MCF 10A (cell line): ENCODE measurements at regions of chr15 and their contacts with region 1.

Region 1: DNA sequence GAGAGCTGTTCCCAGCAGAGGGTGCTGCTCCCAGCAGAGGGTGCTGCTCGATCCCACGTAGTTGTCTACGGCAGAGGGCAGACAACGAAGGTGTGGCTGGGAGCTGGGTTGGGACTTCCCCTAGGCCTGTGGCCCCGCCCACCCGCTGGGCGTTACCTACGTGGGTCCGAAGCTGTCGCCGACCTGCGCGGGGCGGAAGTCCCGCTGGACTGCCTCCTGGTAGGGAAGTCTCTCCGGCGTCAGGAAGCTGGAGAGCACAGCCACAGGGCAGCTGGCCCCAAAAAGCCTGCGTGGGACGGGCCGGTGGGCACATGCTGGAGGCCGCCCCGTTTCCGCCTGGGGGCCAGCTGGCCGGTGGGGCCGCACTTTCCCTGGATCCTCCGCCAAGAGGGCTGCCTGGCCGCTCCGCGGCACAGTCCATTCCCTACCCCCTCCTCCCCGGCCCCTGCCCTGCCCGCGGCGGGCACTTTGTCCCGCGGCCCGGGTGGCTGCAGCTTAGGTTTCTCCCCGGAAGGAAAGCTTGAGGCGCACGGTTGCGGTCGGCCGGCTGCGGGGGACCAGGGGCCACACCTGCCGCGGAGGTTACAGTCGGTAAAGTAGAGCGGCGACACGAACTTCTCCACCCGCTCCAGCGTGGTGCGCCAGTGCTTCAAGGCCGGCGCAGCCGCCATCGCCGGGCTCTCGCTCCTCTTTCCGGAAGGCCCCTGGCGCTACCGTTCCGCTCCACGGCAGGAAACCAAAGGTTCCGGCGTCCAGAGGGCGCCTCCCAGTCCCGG is at the start of gene MAN2C1:
- DNase-seq: peak; percentile 97
- H3K4me3 Mint-ChIP-seq: peak within 1 kb of the TSS; percentile 91
- H3K27ac Mint-ChIP-seq: peak within 1 kb of the TSS; percentile 96
- H3K4me1 Mint-ChIP-seq: peaks cover 8% of the 10 kb centered on the region
- H3K27me3 Mint-ChIP-seq: no peaks in the 10 kb centered on the region
- CTCF ChIP-seq: peak; percentile 64
- total RNA-seq, gene MAN2C1: 163 and 165 TPM in 2 replicates

Region 2: GRCh38 chr15:74695597-74696397 is 672.3 kb before region 1 on chr15 and contains the start of gene EDC3:
- CTCF ChIA-PET with region 1: no interaction called
- POLR2A ChIA-PET with region 1: no interaction called
- intact Hi-C with region 1: no loop called
- DNase-seq: peak; percentile 85
- H3K4me3 Mint-ChIP-seq: peak within 1 kb of the TSS; percentile 95
- H3K27ac Mint-ChIP-seq: peak within 1 kb of the TSS; percentile 99
- H3K4me1 Mint-ChIP-seq: no peaks in the 10 kb centered on the region
- H3K27me3 Mint-ChIP-seq: peaks cover 6% of the 10 kb centered on the region
- CTCF ChIP-seq: no peak
- total RNA-seq, gene EDC3: 42.8 and 53.3 TPM in 2 replicates

Region 3: DNA sequence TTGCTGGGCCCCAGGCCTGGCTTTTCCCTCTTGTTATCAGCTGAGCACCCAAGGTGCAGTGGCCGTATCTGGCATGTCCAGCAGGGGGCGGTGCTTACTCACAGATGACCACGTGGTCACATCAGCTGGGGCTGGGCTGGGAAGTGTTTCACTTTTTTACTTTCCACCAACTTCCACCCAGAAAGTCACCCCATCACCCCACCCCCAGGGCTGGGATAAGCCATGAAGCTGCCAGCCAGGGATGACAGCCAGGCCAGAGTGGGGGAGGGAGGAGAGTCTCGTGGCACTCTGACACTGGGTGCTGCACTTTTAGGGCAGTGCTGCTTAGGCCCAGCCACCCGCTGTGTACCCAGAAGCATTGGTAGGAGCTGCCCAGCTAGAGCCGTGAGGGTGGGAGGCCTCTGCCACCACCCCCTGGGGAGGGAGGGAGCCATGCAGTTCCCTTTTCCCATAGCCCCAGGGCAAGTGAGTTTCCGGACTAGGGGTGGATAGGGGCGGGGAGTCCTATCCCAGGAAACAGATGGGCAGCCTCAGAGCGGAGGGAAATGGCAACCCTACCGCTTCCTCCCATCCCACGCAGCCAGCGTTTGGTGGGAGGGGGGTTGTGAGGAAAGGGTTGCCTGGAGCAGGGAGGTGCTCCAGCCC is 338.6 kb before region 1 on chr15:
- CTCF ChIA-PET with region 1: interaction called, 3 read pairs
- POLR2A ChIA-PET with region 1: interaction called, 4 read pairs
- intact Hi-C with region 1: loop called (anchors 2 kb)
- DNase-seq: peak; percentile 94
- H3K4me3 Mint-ChIP-seq: peak overlapping the region; percentile 10
- H3K27ac Mint-ChIP-seq: peak overlapping the region; percentile 27
- H3K4me1 Mint-ChIP-seq: peaks cover 19% of the 10 kb centered on the region
- H3K27me3 Mint-ChIP-seq: no peaks in the 10 kb centered on the region
- CTCF ChIP-seq: peak; percentile 91

Region 4: DNA sequence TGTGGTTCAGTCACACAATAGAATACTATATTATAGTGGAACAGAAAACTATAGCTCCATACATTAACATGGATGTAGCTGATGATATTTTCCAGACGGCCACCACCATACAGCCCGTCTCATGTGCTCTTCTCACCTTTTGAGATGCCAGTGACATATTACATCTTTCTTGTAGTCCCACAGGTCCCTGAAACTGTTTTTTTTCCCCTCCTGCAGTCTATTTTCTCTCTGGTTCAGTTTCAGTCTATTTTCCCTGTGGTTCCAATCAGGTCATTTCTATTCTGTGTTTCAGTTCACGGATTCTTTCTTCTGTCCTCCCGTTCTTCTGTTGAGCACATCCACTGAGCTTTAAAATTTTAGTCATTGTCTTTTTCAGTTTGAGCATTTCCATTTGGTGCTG is 272.5 kb before region 1 on chr15:
- CTCF ChIA-PET with region 1: no interaction called
- POLR2A ChIA-PET with region 1: no interaction called
- intact Hi-C with region 1: no loop called
- DNase-seq: no peak
- H3K4me3 Mint-ChIP-seq: no peak overlapping the region
- H3K27ac Mint-ChIP-seq: no peak overlapping the region
- H3K4me1 Mint-ChIP-seq: no peaks in the 10 kb centered on the region
- H3K27me3 Mint-ChIP-seq: no peaks in the 10 kb centered on the region
- CTCF ChIP-seq: no peak

Region 5: DNA sequence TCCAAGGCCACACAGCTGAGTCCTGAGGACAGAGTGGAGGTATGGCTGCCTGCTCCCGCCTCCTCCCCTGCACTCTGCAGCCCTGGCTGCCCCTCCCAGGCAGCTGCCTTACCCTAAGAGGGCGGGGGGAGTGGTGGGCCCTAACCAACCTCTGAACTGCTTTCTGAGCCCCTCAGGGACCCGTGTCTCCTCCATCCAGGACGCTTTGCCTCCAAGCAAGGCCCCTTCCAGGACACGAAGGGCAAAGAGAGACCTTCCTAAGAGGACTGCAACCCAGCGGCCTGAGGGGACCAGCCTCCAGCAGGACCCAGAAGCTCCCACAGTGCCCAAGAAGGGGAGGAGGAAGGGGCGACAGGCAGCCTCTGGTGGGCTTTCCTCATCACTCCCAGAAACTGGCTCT is 13.6 kb before region 1 on chr15:
- CTCF ChIA-PET with region 1: interaction called, 23 read pairs
- POLR2A ChIA-PET with region 1: interaction called, 30 read pairs
- intact Hi-C with region 1: no loop called
- DNase-seq: no peak
- H3K4me3 Mint-ChIP-seq: no peak overlapping the region
- H3K27ac Mint-ChIP-seq: no peak overlapping the region
- H3K4me1 Mint-ChIP-seq: no peaks in the 10 kb centered on the region
- H3K27me3 Mint-ChIP-seq: no peaks in the 10 kb centered on the region
- CTCF ChIP-seq: no peak

Region 6: DNA sequence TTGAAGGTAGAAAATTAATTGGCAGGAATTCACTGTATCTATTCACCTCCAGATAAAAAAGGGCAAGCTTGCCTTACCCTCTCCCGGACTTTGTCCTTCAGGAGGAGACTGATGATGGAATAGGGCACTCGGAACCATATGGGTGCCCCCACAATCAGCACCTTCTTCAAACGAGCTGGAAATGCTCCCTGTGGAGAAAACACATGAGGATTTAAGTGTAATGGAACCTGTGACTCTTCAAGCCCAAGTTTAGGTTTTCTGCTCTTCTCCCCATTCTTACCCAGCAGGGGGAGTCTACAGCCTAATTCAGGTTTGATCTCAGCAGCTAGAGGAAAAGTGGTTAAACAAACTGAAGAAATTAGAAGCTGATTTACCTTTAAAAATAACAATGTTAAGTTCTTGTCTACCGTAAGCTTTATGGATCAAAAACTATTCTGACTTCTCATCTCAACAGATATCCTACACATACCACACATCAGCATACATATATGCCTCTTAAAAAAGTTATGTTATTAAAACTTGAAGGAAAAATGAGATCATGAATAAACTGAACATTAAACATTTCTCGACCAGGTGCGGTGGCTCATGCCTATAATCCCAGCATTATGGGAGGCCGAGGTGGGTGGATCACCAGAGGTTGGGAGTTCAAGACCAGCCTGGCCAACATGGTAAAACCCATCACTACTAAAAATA is 140.9 kb after region 1 on chr15:
- CTCF ChIA-PET with region 1: interaction called, 3 read pairs
- POLR2A ChIA-PET with region 1: no interaction called
- intact Hi-C with region 1: loop called (anchors 5 kb)
- DNase-seq: peak; percentile 53
- H3K4me3 Mint-ChIP-seq: no peak overlapping the region
- H3K27ac Mint-ChIP-seq: no peak overlapping the region
- H3K4me1 Mint-ChIP-seq: no peaks in the 10 kb centered on the region
- H3K27me3 Mint-ChIP-seq: no peaks in the 10 kb centered on the region
- CTCF ChIP-seq: peak; percentile 51

Region 7: DNA sequence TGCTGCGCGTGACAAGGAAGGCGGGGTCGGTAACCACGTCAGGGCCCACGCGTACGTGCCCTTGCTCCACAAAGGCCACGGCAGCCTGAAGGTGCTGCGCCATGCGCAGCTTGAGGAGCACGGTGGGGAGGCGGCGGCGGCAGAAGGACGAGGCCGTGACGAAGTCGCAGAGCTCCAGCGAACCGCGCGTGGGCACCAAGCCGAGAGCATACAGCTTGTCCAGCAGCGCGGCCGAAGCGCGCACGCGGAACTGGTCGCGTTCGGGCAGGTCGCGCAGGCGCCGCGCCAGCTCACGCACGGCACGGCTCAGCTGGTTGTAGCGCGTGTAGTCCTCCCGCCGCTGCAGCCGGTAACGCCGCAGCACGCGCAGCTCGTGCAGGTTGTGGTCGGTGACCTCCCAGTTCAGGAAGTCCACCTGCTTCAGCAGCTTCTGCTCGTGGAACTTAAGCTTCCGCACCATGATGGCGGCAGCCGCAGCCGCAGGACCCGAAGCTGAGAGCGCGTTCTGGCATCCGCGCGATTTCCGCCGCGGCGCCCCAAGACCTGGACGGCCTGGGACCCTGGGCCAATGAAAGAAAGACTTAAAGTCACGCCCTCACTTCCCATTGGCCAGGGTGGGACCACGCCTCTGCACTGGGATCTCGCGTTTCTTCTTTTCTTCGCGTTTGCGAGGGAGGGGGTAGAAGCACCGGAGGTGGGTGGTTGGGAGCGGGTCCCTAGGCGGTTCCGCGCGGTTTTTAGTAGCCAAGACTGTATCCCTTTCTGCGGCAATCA is 271.8 kb after region 1 on chr15 and contains the start of gene IMP3:
- CTCF ChIA-PET with region 1: interaction called, 9 read pairs
- POLR2A ChIA-PET with region 1: interaction called, 49 read pairs
- intact Hi-C with region 1: loop called (anchors 1 kb)
- DNase-seq: peak; percentile 98
- H3K4me3 Mint-ChIP-seq: peak within 1 kb of the TSS; percentile 87
- H3K27ac Mint-ChIP-seq: peak within 1 kb of the TSS; percentile 70
- H3K4me1 Mint-ChIP-seq: peaks cover 18% of the 10 kb centered on the region
- H3K27me3 Mint-ChIP-seq: no peaks in the 10 kb centered on the region
- CTCF ChIP-seq: no peak
- total RNA-seq, gene IMP3: 45.8 and 58.0 TPM in 2 replicates

Region 8: GRCh38 chr15:75684642-75685041 is 316.5 kb after region 1 on chr15:
- CTCF ChIA-PET with region 1: interaction called, 5 read pairs
- POLR2A ChIA-PET with region 1: interaction called, 4 read pairs
- intact Hi-C with region 1: loop called (anchors 2 kb)
- DNase-seq: no peak
- H3K4me3 Mint-ChIP-seq: no peak overlapping the region
- H3K27ac Mint-ChIP-seq: no peak overlapping the region
- H3K4me1 Mint-ChIP-seq: no peaks in the 10 kb centered on the region
- H3K27me3 Mint-ChIP-seq: no peaks in the 10 kb centered on the region
- CTCF ChIP-seq: no peak

Region 9: DNA sequence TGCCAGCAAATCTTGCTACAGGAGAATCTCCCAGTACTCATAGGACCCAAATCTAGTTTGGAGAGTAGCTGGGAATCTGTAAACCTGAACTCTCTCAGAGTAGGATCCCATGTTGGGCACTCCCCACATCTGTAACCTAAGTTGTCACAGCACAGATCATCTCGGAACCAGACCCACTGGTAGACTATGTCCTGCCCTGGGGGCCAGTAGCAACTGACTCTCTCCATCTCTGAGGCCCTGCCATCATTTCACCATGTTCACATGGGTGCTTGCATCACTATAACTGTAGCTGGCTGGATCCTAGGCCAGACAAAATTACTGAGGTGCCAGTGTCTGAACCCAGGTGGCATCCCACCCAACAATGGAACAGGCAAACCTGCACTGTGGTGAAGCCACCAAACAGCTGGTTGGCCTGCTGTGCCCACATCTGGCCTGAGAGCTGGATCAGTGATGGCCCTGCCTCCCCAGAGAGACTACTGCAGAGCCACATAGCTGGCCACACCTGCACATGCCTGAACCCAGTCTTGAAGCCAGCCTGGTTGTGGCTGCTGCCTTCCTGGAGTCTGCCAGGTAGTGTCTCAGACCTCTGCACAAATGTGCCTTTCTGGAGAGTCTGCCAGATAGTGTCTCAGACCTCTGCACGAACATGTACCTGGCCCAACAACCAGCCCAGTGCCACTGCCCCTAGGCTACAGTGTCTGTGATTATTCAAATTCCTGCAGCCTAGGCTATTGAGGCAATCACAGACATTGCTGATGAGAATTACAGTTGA is 1050.5 kb after region 1 on chr15:
- CTCF ChIA-PET with region 1: no interaction called
- POLR2A ChIA-PET with region 1: no interaction called
- intact Hi-C with region 1: no loop called
- DNase-seq: no peak
- H3K4me3 Mint-ChIP-seq: no peak overlapping the region
- H3K27ac Mint-ChIP-seq: no peak overlapping the region
- H3K4me1 Mint-ChIP-seq: no peaks in the 10 kb centered on the region
- H3K27me3 Mint-ChIP-seq: no peaks in the 10 kb centered on the region
- CTCF ChIP-seq: no peak